GM12878 (cell line): ENCODE measurements at regions of chr5 and their contacts with region 1.

Region 1: DNA sequence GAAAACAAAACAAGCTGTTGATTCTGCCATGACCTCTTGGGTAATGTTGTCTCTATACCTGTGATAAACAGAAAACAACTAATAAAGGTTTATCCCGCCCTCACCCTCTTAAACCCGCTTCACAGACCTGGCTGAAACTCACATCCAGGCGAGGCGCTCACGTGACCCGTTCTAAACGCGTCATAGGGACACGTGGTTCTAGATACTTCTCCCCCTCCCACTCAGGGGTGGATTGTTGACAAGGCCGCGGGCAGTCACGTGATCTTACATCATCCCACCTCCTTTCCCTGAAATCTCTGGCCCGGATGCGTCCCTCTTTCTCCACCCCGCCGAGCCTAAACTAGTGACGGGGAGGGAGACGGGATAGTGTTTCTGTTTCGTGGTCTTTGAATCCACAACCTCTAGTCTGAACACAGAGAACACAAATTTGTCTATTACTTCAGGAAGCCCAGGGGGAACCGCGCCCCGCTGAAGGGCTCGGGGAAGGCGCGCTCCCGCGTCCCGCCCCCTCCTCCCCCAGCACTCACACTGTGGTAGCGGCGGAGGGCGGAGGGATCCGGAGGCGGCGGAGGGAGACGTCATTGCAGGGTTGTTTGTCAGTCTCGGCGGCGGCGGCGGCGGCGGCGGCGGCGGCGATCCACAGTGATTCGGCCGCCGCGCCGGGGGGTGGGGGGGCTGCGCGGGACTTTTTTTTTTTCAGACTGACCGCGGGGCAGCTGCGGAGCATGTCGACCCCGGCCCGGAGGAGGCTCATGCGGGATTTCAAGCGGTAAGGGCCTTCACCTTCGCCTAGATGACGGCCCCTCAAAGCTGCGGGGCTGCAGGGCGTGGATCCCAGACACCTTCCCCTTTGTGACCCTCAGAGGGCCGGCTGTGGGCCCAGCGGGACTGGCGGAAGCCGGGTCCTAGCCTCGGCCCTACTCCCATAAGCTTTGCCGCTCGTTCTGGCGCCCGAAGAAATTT is at the start of gene UBE2B:
- DNase-seq: peak; percentile 97
- ATAC-seq: peak; percentile 75
- H3K4me3 ChIP-seq: peak within 1 kb of the TSS; percentile 99
- H3K27ac ChIP-seq: peak within 1 kb of the TSS; percentile 89
- H3K4me1 ChIP-seq: peaks cover 2% of the 10 kb centered on the region; the same call in 1 of the 2 replicates
- H3K27me3 ChIP-seq: no peaks in the 10 kb centered on the region
- CTCF ChIP-seq: no peak
- EP300 ChIP-seq: peak in 1 of 2 experiments; percentile 73
- POLR2A ChIP-seq: peak; percentile 76
- RAD21 ChIP-seq: no peak
- polyA plus RNA-seq, gene UBE2B: 126 to 154 TPM

Region 2: DNA sequence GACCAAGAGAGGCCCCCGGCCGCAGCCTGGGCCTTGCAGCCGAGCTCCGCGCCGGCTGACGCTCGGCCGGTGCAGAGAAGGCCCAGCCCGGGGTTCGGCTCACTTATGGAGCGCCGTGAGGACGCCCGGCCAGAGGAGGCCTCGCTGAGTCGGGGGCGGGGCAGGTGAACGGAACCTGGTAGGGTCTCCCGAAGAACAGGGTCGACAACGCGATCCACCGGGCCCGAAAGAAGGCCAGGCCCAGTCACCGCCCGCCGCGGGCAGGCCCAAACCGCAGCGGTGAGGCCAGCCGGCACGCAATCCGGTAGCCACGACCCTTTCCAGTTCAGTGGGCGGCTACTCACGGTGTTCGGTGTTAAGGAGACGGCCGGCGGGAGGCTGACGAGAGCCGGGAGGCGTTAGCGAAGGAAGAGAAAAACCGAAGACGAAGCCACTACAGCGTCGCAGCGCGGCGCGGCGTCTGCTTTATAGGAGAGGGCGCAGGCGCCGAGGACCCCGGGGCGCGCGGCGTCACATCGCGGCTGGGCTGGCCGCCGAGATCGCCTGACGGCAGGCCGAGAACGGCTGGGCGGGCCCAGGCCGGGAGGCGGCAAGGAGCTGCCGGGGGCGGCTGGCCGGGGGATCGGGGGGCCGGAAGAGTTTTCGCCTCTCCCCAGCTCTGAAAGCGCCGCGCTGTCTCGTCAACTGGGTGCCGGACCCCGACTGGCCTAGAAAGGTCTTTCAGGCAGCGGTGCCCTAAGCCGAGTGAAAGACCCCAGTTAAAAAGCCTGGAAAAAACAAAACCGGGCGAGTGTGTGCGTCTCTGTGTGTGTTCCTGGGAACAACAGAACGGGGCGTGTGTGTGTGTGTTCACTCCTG is 194.4 kb before region 1 on chr5 and contains the start of gene SKP1:
- CTCF ChIA-PET with region 1: no interaction called
- POLR2A ChIA-PET with region 1: no interaction called
- RAD21 ChIA-PET with region 1: no interaction called
- SMC1A ChIA-PET with region 1: no interaction called
- in situ Hi-C with region 1: no loop called
- intact Hi-C with region 1: loop called (anchors 5 kb)
- DNase-seq: peak; percentile 42
- ATAC-seq: peak; percentile 89
- H3K4me3 ChIP-seq: peak within 1 kb of the TSS; percentile 99
- H3K27ac ChIP-seq: peak within 1 kb of the TSS; percentile 89
- H3K4me1 ChIP-seq: peaks cover 3% of the 10 kb centered on the region
- H3K27me3 ChIP-seq: no peaks in the 10 kb centered on the region
- CTCF ChIP-seq: no peak
- EP300 ChIP-seq: no peak
- POLR2A ChIP-seq: peak; percentile 100
- RAD21 ChIP-seq: no peak
- polyA plus RNA-seq, gene SKP1: 1,587 to 1,686 TPM

Region 3: GRCh38 chr5:134819404-134819963 is 448.3 kb after region 1 on chr5:
- CTCF ChIA-PET with region 1: no interaction called
- POLR2A ChIA-PET with region 1: no interaction called
- RAD21 ChIA-PET with region 1: no interaction called
- SMC1A ChIA-PET with region 1: no interaction called
- in situ Hi-C with region 1: no loop called
- intact Hi-C with region 1: no loop called
- DNase-seq: no peak
- ATAC-seq: no peak
- H3K4me3 ChIP-seq: no peak overlapping the region
- H3K27ac ChIP-seq: no peak overlapping the region
- H3K4me1 ChIP-seq: no peaks in the 10 kb centered on the region
- H3K27me3 ChIP-seq: no peaks in the 10 kb centered on the region
- CTCF ChIP-seq: no peak
- EP300 ChIP-seq: no peak
- POLR2A ChIP-seq: no peak
- RAD21 ChIP-seq: no peak